ENCODE measurements at regions of chr6 and their contacts with region 1.

Region 1: GRCh38 chr6:35391240-35391968 is 49.0 kb downstream of the PPARD start:
- DNase-seq: no peak
- H3K4me3 Mint-ChIP-seq: no peak overlapping the region
- H3K27ac Mint-ChIP-seq: peak overlapping the region; percentile 65
- H3K4me1 Mint-ChIP-seq: peaks cover 33% of the 10 kb centered on the region
- H3K27me3 Mint-ChIP-seq: no peaks in the 10 kb centered on the region

Region 2: DNA sequence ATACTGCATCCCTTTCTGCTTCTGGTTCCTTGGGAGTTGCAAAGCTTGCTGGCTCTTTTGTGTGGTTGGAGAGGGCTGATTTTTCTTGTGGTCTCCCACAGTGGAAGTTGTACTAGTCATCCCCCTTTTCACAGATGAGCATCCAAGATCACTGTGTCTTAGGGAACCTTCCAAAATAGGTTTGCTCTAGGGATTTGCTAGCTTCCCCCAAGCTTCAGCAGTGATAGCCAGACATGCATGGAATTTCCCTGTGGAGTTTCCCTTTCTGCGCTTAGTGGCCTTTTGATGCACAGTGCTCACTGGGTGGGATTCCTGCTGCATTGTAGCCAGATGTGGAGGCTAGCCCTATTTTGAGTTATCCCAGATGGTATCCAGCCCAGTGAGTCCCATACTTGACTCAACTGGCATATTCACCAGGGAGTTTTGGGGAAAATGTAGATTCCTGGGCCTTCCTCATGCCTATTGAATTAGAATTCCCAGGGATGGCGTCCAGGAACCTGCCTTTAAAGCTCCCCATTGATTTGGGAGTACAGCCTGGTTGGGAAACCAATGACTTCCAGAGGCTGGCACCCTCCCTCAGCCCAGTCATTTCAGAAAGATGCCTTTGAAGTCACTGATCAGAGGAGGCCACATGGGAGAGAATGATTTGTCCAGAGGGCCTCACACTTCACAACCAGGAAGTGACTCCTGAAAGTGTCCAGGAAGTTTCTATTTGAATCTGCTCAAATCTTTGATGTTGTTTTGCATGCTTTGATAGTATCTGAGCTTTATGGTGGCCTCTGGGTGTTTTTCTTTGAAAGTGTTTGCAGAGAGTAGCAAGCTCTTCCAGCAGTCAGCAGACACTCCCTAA is 23.1 kb before region 1 on chr6:
- intact Hi-C with region 1: loop called (anchors 1 kb)
- DNase-seq: peak; percentile 26
- H3K4me3 Mint-ChIP-seq: no peak overlapping the region
- H3K27ac Mint-ChIP-seq: peak overlapping the region; percentile 67
- H3K4me1 Mint-ChIP-seq: peaks cover 50% of the 10 kb centered on the region
- H3K27me3 Mint-ChIP-seq: no peaks in the 10 kb centered on the region

Region 3: GRCh38 chr6:35601331-35602132 is 210.1 kb after region 1 on chr6:
- intact Hi-C with region 1: no loop called
- DNase-seq: peak; percentile 41
- H3K4me3 Mint-ChIP-seq: peak overlapping the region; percentile 59
- H3K27ac Mint-ChIP-seq: peak overlapping the region; percentile 74
- H3K4me1 Mint-ChIP-seq: peaks cover 48% of the 10 kb centered on the region
- H3K27me3 Mint-ChIP-seq: no peaks in the 10 kb centered on the region

Measured in activated T-helper 2 cell treated with anti-CD3 and anti-CD28 coated beads, Interferon-gamma antibody, Interleukin-2, Interleukin-4, amounts not matched to agents 10 μg/mL and 5 μg/mL and 100 μg/mL, durations not matched to agents 14 hours and 24 hours and 36 hours (primary cell).